ENCODE measurements at regions of chr7 and their contacts with region 1.

Region 1: GRCh38 chr7:25805027-25805687 is 346.8 kb upstream of the NFE2L3 start:
- DNase-seq: no peak
- H3K4me3 ChIP-seq: no peak overlapping the region
- H3K27ac ChIP-seq: peak overlapping the region; percentile 19 to 59
- H3K4me1 ChIP-seq: peaks cover 0 to 36% of the 10 kb centered on the region in 2 donors
- H3K27me3 ChIP-seq: no peaks in the 10 kb centered on the region
- CTCF ChIP-seq: no peak

Region 2: DNA sequence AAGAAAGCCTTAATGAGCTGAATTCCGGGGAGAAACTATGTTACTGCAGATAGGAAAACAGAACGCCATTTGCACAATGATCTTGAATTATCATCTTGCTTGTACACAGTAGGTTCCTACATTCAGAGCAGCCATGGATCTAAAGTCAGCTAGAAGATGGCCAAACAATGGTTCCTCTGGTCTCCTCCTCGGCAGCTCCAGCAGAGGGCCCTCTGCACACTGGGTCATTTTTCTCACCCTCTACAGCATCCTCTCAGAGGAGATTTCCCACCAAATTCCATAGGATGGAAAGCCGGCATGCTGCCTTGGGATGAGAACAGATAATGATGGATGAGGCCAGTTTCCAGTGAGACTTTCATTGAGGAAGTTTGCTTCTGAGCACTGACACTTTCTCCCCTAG is 38.3 kb after region 1 on chr7:
- intact Hi-C with region 1: loop called (anchors 2 kb)
- DNase-seq: no peak
- H3K4me3 ChIP-seq: no peak overlapping the region
- H3K27ac ChIP-seq: peak overlapping the region; percentile 71 to 73
- H3K4me1 ChIP-seq: peaks cover 11 to 81% of the 10 kb centered on the region in 2 donors
- H3K27me3 ChIP-seq: no peaks in the 10 kb centered on the region
- CTCF ChIP-seq: no peak

Region 3: GRCh38 chr7:25862260-25863037 is 57.3 kb after region 1 on chr7:
- intact Hi-C with region 1: no loop called
- DNase-seq: peak; percentile 50 to 91
- H3K4me3 ChIP-seq: peak overlapping the region in 1 of 2 donors; percentile 5
- H3K27ac ChIP-seq: no peak overlapping the region
- H3K4me1 ChIP-seq: no peaks in the 10 kb centered on the region
- H3K27me3 ChIP-seq: peaks cover 43% of the 10 kb centered on the region
- CTCF ChIP-seq: no peak

Region 4: GRCh38 chr7:25968205-25968993 is 163.2 kb after region 1 on chr7:
- intact Hi-C with region 1: no loop called
- DNase-seq: no peak
- H3K4me3 ChIP-seq: no peak overlapping the region
- H3K27ac ChIP-seq: no peak overlapping the region
- H3K4me1 ChIP-seq: peaks cover 0 to 3% of the 10 kb centered on the region in 2 donors
- H3K27me3 ChIP-seq: no peaks in the 10 kb centered on the region
- CTCF ChIP-seq: no peak